Activated T-helper 1 cell treated with anti-CD3 and anti-CD28 coated beads, Interleukin-12 subunit alpha, Interleukin-12 subunit beta, Interleukin-2, Interleukin-4 antibody, amounts not matched to agents 30 ng/mL and 10 ng/mL and 1 ng/mL, durations not matched to agents 14 hours and 24 hours and 36 hours (primary cell): ENCODE measurements at regions of chr6 and their contacts with region 1.

Region 1: GRCh38 chr6:31665501-31666336 is at the start of gene CSNK2B:
- DNase-seq: peak; percentile 98
- H3K4me3 Mint-ChIP-seq: peak within 1 kb of the TSS; percentile 98
- H3K27ac Mint-ChIP-seq: peak within 1 kb of the TSS; percentile 90
- H3K4me1 Mint-ChIP-seq: peaks cover 74% of the 10 kb centered on the region
- H3K27me3 Mint-ChIP-seq: no peaks in the 10 kb centered on the region
- total RNA-seq, gene CSNK2B: 302 and 308 TPM in 2 replicates

Region 2: GRCh38 chr6:31225735-31226134 is 440.0 kb before region 1 on chr6:
- intact Hi-C with region 1: no loop called
- DNase-seq: no peak
- H3K4me3 Mint-ChIP-seq: no peak overlapping the region
- H3K27ac Mint-ChIP-seq: no peak overlapping the region
- H3K4me1 Mint-ChIP-seq: no peaks in the 10 kb centered on the region
- H3K27me3 Mint-ChIP-seq: peaks cover 10% of the 10 kb centered on the region

Region 3: DNA sequence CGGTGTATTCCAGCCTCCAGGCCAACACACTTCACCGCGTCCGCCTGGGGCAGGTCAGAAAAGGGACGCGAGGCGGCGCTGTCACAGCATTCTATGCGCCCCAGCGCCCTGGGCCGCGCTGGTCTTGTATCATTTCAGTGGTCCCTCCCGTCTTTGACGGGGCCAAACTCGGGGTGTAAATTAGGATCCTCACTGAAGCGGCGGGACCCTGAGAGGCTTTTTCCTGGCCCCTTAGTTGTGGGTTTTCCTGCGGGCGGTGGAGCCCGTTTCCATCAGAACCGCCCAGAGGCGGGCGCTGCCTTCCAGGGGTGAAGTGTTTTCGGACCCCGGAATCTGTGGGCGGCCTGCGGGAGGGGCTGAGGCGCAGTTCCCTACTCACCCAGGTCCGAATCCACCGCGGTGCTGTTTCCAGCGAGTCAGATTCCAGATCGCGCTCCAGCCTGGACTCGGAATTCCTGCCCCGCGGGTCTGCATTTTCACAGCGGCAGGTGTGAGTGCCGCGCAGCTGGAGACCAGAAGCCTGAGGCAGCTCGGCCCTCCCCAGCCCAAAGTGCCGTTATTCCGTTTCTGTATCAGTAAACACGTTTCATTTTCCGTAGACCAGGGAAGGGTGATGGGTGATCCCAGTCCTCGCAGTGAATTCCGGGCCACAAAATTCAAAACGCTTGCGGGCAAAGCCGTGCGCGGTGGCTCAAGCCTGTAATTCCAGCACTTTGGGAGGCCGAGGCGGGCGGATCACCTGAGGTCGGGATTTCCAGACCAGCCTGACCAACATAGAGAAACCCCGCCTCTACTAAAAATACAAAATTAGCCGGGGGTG is 171.6 kb before region 1 on chr6:
- intact Hi-C with region 1: loop called (anchors 1 kb)
- DNase-seq: peak; percentile 69
- H3K4me3 Mint-ChIP-seq: peak overlapping the region; percentile 89
- H3K27ac Mint-ChIP-seq: peak overlapping the region; percentile 85
- H3K4me1 Mint-ChIP-seq: peaks cover 46% of the 10 kb centered on the region
- H3K27me3 Mint-ChIP-seq: no peaks in the 10 kb centered on the region

Region 4: GRCh38 chr6:31652925-31653718 is 12.6 kb before region 1 on chr6:
- intact Hi-C with region 1: loop called (anchors 1 kb)
- DNase-seq: peak; percentile 81
- H3K4me3 Mint-ChIP-seq: peak overlapping the region; percentile 93
- H3K27ac Mint-ChIP-seq: peak overlapping the region; percentile 100
- H3K4me1 Mint-ChIP-seq: peaks cover 48% of the 10 kb centered on the region
- H3K27me3 Mint-ChIP-seq: no peaks in the 10 kb centered on the region

Region 5: GRCh38 chr6:31739639-31740396 is 74.1 kb after region 1 on chr6 and contains the start of gene MSH5:
- intact Hi-C with region 1: loop called (anchors 1 kb)
- DNase-seq: peak; percentile 97
- H3K4me3 Mint-ChIP-seq: peak within 1 kb of the TSS; percentile 98
- H3K27ac Mint-ChIP-seq: peak within 1 kb of the TSS; percentile 99
- H3K4me1 Mint-ChIP-seq: peaks cover 64% of the 10 kb centered on the region
- H3K27me3 Mint-ChIP-seq: peaks cover 3% of the 10 kb centered on the region
- total RNA-seq, gene MSH5: 80.5 and 83.4 TPM in 2 replicates

Region 6: DNA sequence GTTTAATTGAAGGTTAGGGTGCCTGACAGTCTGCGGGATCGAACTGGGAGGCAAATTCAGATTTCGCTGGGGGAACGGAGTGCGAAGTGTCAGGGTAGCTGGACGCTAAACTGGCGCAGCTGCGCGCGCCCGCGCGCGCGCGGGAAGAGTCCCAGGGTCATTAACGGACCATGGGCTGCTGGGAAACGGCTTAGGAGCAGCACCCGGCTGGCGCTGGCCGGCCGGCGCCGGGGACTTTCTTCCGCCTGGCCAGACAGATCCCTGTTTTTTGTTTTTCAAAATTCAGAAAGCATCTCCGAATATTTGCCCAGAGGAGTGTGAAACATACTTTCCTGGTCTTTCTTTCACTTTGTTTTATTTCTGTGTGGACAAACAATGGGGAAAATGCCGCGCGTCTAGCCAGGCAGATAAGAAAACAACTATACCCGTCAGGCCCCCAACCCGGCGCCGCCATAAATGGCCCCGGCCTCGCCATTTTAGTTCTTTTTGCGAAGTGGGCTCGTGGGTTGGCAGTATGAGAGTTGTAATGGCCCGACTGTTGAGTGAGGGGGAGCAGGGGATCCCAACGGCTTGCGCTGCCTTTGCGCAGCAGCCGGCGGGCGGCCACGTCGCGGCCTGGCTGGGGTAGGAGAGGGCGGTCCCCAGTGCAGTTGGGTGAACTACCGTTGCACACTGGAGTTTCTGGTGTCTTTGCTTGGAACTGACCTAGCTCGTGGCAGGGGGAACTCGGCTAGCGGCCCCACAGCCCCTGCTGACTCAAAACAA is 168.9 kb after region 1 on chr6:
- intact Hi-C with region 1: loop called (anchors 1 kb)
- DNase-seq: peak; percentile 72
- H3K4me3 Mint-ChIP-seq: peak overlapping the region; percentile 94
- H3K27ac Mint-ChIP-seq: peak overlapping the region; percentile 100
- H3K4me1 Mint-ChIP-seq: peaks cover 49% of the 10 kb centered on the region
- H3K27me3 Mint-ChIP-seq: no peaks in the 10 kb centered on the region

Region 7: DNA sequence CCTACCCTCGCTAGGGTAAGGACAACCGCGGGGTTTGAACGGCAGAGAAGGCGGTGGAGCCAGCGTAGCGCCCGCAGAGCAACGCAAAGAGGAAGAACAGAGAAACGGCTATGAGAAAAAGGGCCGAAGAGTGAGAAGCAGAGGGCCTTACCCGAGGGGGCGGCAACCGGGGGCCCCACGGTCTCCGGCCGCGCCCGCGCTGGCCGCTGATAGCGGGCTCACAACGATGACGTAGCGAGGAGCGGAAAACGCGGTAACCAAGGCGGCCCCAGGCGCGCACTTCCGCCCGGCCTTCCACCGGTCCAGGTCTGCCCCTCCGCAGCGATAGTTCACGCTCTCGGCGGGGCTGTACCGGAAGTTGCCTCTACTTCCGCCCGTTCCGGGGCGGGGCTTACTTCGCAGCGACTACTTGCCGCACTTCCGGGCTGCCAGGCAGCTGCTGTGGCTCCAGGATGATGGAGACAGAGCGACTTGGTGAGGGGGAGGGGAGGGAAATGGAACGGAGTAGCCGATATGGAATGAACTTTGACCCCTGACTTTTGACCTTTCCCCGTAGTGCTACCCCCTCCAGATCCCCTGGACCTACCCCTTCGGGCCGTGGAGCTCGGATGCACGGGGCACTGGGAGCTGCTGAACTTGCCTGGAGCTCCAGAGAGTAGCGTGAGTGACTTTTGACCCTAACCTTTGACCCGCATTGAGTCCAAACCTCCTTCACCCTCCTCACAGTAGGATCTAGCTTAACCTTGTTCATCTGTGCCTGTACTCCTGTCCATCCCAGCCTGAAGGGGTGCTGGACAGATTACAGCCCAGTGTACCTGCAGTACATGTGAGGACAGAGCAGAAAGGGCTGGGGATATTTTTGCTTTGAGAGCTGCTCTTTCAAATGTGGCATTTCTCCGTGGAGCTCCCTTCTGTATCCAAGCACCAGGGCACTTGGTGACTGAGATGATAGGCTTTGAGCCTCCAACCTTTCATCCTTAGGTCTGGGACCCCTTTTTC is 293.3 kb after region 1 on chr6 and contains the starts of genes NELFE and SKIC2:
- intact Hi-C with region 1: loop called (anchors 1 kb)
- DNase-seq: peak; percentile 99
- H3K4me3 Mint-ChIP-seq: peak within 1 kb of the TSS; percentile 98
- H3K27ac Mint-ChIP-seq: peak within 1 kb of the TSS; percentile 98
- H3K4me1 Mint-ChIP-seq: peaks cover 46% of the 10 kb centered on the region
- H3K27me3 Mint-ChIP-seq: no peaks in the 10 kb centered on the region
- total RNA-seq, gene NELFE: 92.3 and 97.7 TPM in 2 replicates
- total RNA-seq, gene SKIC2: 85.8 and 101 TPM in 2 replicates